ENCODE measurements at regions of chr11 and their contacts with region 1.

Region 1: DNA sequence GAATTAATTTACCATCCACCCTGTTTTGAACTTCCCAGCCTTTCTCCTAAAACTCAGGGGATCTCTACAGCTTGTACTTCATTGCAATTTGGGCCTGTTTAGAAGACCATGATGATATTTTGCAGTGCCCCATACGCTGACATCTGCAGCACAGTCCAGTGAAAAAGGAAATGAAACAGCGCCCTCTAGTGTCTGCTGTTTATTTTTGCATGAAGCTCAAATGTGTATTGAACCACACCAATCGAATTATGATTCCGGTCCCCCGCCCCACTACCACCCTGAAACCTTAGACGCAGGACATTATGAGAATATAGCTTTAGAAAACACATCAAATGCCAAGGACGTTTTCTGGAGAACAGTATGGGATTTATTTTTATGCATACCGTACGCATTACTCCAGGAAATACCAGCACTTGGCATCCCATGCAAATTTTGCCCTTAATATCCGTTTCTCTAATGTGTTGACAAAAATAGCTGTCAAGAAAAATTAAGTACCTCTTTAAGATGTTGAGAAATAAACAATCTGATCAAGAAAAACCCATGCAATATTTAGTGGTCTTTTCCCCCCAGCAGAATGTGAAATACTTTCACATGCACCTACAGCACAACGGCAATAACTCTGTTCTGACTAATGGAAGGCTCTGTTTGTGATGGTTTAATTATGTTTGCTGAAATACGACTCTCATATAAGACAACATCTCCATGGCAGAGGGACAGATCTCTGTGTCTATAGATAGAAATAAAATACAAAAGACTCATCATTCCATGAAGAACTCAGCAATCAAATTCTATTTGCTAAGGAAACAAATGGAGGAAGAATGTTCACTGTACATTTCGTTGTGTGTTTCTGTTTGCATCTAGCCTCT is 93.9 kb downstream of the TECTA start:
- DNase-seq: peak; percentile 23 to 47 (median 41)
- H3K4me3 ChIP-seq: no peak overlapping the region
- H3K4me3 Mint-ChIP-seq: no peak overlapping the region
- H3K27ac ChIP-seq: no peak overlapping the region
- H3K27ac Mint-ChIP-seq: no peak overlapping the region
- H3K4me1 ChIP-seq: no peaks in the 10 kb centered on the region
- H3K4me1 Mint-ChIP-seq: no peaks in the 10 kb centered on the region
- H3K27me3 ChIP-seq: peaks cover 7 to 15% of the 10 kb centered on the region in 2 donors
- H3K27me3 Mint-ChIP-seq: peaks cover 6 to 21% (median 12%) of the 10 kb centered on the region in 3 donors
- CTCF ChIP-seq: peak; percentile 93

Region 2: GRCh38 chr11:120945042-120945441 is 249.9 kb before region 1 on chr11:
- intact Hi-C with region 1: loop called in 1 of 2 experiments (anchors 10 kb)
- DNase-seq: no peak
- H3K4me3 ChIP-seq: no peak overlapping the region
- H3K4me3 Mint-ChIP-seq: no peak overlapping the region
- H3K27ac ChIP-seq: no peak overlapping the region
- H3K27ac Mint-ChIP-seq: no peak overlapping the region
- H3K4me1 ChIP-seq: no peaks in the 10 kb centered on the region
- H3K4me1 Mint-ChIP-seq: no peaks in the 10 kb centered on the region
- H3K27me3 ChIP-seq: no peaks in the 10 kb centered on the region
- H3K27me3 Mint-ChIP-seq: peaks cover 2 to 13% (median 5%) of the 10 kb centered on the region in 3 donors
- CTCF ChIP-seq: peak; percentile 42